T-cell (primary cell): ENCODE measurements at regions of chr6 and their contacts with region 1.

Region 1: GRCh38 chr6:24774696-24775519 is at the start of gene GMNN:
- DNase-seq: peak; percentile 91 to 99 (median 97)
- ATAC-seq: peak; percentile 92 to 96 (median 94)
- H3K4me3 ChIP-seq: peak within 1 kb of the TSS; percentile 92 to 98
- H3K4me3 Mint-ChIP-seq: peak within 1 kb of the TSS; percentile 97 to 98 (median 98)
- H3K27ac ChIP-seq: peak within 1 kb of the TSS; percentile 92
- H3K27ac Mint-ChIP-seq: peak within 1 kb of the TSS; percentile 94 to 96
- H3K4me1 ChIP-seq: peaks cover 11 to 15% of the 10 kb centered on the region in 2 experiments
- H3K4me1 Mint-ChIP-seq: peaks cover 24 to 31% (median 30%) of the 10 kb centered on the region in 3 donors
- H3K27me3 ChIP-seq: no peaks in the 10 kb centered on the region
- H3K27me3 Mint-ChIP-seq: no peaks in the 10 kb centered on the region
- total RNA-seq, gene GMNN: 5.7 to 12.3 (median 6.1) TPM

Region 2: GRCh38 chr6:25061289-25061936 is 286.5 kb after region 1 on chr6:
- CTCF ChIA-PET with region 1: no interaction called
- POLR2A ChIA-PET with region 1: interaction called in 1 of 2 experiments, 12 read pairs
- DNase-seq: no peak
- ATAC-seq: no peak
- H3K4me3 ChIP-seq: no peak overlapping the region
- H3K4me3 Mint-ChIP-seq: no peak overlapping the region
- H3K27ac ChIP-seq: no peak overlapping the region
- H3K27ac Mint-ChIP-seq: no peak overlapping the region
- H3K4me1 ChIP-seq: peaks cover 7 to 15% of the 10 kb centered on the region in 2 experiments
- H3K4me1 Mint-ChIP-seq: peaks cover 15 to 18% (median 16%) of the 10 kb centered on the region in 3 donors
- H3K27me3 ChIP-seq: no peaks in the 10 kb centered on the region
- H3K27me3 Mint-ChIP-seq: no peaks in the 10 kb centered on the region